ENCODE measurements at regions of chr6 and their contacts with region 1.

Region 1: DNA sequence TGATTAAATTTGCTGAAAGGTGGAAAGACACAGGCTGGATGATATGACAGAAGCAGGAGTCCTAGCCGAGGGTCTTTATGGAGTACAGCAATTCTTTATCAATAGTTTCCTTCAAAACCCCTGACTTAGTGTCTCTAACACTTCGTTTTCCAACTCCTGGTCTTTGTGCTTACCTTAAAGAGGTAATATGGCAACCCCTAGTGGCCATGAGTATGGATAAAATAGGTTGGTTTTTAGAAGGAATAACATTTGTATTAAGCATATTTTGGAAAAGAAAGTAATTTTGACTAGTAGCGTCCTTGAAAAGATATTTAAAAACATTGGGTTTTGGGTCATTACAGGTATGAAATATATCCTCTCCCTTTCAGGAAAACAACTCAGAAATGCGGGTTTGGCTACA is 51.9 kb downstream of the VGLL2 start:
- DNase-seq: peak; percentile 19
- H3K4me3 ChIP-seq: no peak overlapping the region
- H3K27ac ChIP-seq: no peak overlapping the region
- H3K4me1 ChIP-seq: no peaks in the 10 kb centered on the region
- H3K27me3 ChIP-seq: no peaks in the 10 kb centered on the region
- CTCF ChIP-seq: peak; percentile 62 to 67

Region 2: GRCh38 chr6:116779573-116780164 is 537.6 kb before region 1 on chr6:
- CTCF ChIA-PET with region 1: no interaction called
- dilution Hi-C with region 1: no loop called
- in situ Hi-C with region 1: loop called in 1 of 2 experiments (anchors 25 kb)
- intact Hi-C with region 1: loop called (anchors 5 kb)
- DNase-seq: no peak
- H3K4me3 ChIP-seq: no peak overlapping the region
- H3K27ac ChIP-seq: no peak overlapping the region
- H3K4me1 ChIP-seq: no peaks in the 10 kb centered on the region
- H3K27me3 ChIP-seq: no peaks in the 10 kb centered on the region
- CTCF ChIP-seq: peak; percentile 31 to 42

Region 3: GRCh38 chr6:116881236-116881635 is 436.0 kb before region 1 on chr6:
- CTCF ChIA-PET with region 1: no interaction called
- dilution Hi-C with region 1: no loop called
- in situ Hi-C with region 1: no loop called
- intact Hi-C with region 1: loop called (anchors 5 kb)
- DNase-seq: no peak
- H3K4me3 ChIP-seq: no peak overlapping the region
- H3K27ac ChIP-seq: no peak overlapping the region
- H3K4me1 ChIP-seq: peaks cover 9% of the 10 kb centered on the region
- H3K27me3 ChIP-seq: peaks cover 23% of the 10 kb centered on the region
- CTCF ChIP-seq: peak in 1 of 2 donors; percentile 29

Region 4: GRCh38 chr6:116969211-116969863 is 347.9 kb before region 1 on chr6:
- CTCF ChIA-PET with region 1: no interaction called
- dilution Hi-C with region 1: no loop called
- in situ Hi-C with region 1: loop called (anchors 10 to 25 kb)
- intact Hi-C with region 1: loop called (anchors 1 kb)
- DNase-seq: peak; percentile 25
- H3K4me3 ChIP-seq: no peak overlapping the region
- H3K27ac ChIP-seq: no peak overlapping the region
- H3K4me1 ChIP-seq: no peaks in the 10 kb centered on the region
- H3K27me3 ChIP-seq: peaks cover 4% of the 10 kb centered on the region
- CTCF ChIP-seq: peak; percentile 75 to 80

Region 5: DNA sequence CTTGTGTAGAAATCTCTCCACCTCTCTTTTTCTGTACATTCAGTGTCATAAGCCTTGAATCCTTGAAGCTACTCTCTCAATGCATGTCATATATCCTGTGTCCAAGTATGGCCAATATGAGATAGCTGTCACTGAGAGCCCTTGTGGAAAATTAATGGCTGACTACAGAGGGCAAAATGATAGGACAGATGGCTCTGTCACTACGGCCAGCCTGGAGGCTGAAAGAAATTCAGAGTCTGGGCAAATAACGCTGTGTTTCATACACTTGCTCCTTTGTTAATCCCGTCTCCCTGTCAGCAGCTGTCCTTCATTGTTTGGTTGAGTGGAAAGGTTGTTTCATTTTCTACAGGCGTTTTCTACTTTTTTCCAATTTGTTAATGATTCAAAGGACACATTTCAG is 122.3 kb before region 1 on chr6:
- CTCF ChIA-PET with region 1: no interaction called
- dilution Hi-C with region 1: no loop called
- in situ Hi-C with region 1: no loop called
- intact Hi-C with region 1: loop called (anchors 5 kb)
- DNase-seq: no peak
- H3K4me3 ChIP-seq: no peak overlapping the region
- H3K27ac ChIP-seq: no peak overlapping the region
- H3K4me1 ChIP-seq: peaks cover 5% of the 10 kb centered on the region
- H3K27me3 ChIP-seq: no peaks in the 10 kb centered on the region
- CTCF ChIP-seq: no peak

Region 6: DNA sequence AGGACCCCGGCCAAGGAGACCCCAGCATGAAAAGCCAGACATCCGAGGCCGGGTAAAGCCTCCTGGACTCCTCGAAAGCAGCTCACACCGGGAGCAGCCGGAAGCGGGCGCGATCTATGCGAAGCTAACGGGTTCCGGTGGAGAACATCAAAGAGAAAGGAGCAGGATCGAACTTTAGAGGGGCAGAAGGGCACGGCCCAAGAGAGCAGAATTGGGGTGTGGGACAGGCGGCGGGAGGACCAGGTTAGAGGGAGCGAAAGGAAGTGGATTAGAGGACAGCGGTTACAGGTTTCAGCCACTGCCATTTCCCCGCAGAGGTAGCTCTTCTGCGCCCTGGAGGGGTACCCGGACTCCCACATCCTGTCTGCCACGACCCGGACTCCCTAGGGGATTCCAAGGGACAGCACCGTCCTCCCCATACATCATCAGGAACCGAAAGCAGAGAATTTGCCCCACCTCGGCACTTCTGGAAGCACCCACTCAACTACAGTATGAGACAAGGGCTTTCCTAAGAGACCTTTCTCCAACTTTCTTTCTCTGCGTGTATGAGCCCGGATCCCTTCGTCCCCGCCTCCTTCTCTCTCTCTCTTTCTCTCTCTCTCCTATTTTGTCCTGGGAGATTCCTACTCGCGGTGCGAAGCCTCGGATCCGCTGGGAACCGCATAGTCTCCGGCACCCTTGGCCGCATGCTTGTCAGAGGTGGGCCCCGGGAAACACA is 52.4 kb before region 1 on chr6:
- CTCF ChIA-PET with region 1: no interaction called
- dilution Hi-C with region 1: no loop called
- in situ Hi-C with region 1: no loop called
- intact Hi-C with region 1: no loop called
- DNase-seq: peak; percentile 17
- H3K4me3 ChIP-seq: peak overlapping the region; percentile 20 to 32 (median 25)
- H3K27ac ChIP-seq: no peak overlapping the region
- H3K4me1 ChIP-seq: peaks cover 13% of the 10 kb centered on the region
- H3K27me3 ChIP-seq: peaks cover 87% of the 10 kb centered on the region
- CTCF ChIP-seq: no peak

Region 7: DNA sequence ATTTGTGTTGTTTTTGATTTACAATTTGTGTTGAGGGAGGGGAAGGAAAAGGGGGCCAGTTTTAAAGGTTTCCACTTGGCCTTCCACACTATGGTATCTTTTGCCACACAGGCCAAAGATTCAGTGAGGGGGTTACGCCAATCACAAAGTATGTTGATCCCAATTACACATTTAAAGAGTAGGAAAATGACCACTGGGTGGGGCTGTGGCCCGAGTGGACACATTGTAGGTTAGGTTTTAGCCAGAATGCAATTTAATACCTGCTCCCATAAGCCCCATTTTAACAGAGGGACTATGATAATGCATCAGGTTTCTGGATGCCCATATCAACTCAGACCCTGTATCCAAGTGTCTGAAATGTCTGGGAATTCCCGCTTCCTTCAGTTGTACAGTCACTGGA is 36.3 kb before region 1 on chr6:
- CTCF ChIA-PET with region 1: no interaction called
- dilution Hi-C with region 1: no loop called
- in situ Hi-C with region 1: no loop called
- intact Hi-C with region 1: loop called (anchors 5 kb)
- DNase-seq: no peak
- H3K4me3 ChIP-seq: no peak overlapping the region
- H3K27ac ChIP-seq: no peak overlapping the region
- H3K4me1 ChIP-seq: no peaks in the 10 kb centered on the region
- H3K27me3 ChIP-seq: peaks cover 17% of the 10 kb centered on the region
- CTCF ChIP-seq: peak; percentile 21 to 22